H1 (cell line): ENCODE measurements at regions of chr11 and their contacts with region 1.

Region 1: GRCh38 chr11:94595076-94595475 is 27.9 kb downstream of the PIWIL4 start:
- DNase-seq: no peak
- H3K4me3 ChIP-seq: no peak overlapping the region
- H3K27ac ChIP-seq: no peak overlapping the region
- H3K4me1 ChIP-seq: no peaks in the 10 kb centered on the region
- H3K27me3 ChIP-seq: no peaks in the 10 kb centered on the region
- CTCF ChIP-seq: no peak
- EP300 ChIP-seq: no peak
- POLR2A ChIP-seq: no peak
- RAD21 ChIP-seq: no peak

Region 2: GRCh38 chr11:94519478-94520084 is 75.5 kb before region 1 on chr11:
- CTCF ChIA-PET with region 1: interaction called, 17 read pairs
- POLR2A ChIA-PET with region 1: no interaction called
- DNase-seq: no peak
- H3K4me3 ChIP-seq: no peak overlapping the region
- H3K27ac ChIP-seq: no peak overlapping the region
- H3K4me1 ChIP-seq: no peaks in the 10 kb centered on the region
- H3K27me3 ChIP-seq: no peaks in the 10 kb centered on the region
- CTCF ChIP-seq: peak in 2 of 3 experiments; percentile 28 to 34; a peak in 2 of 4 replicates
- EP300 ChIP-seq: no peak
- POLR2A ChIP-seq: no peak
- RAD21 ChIP-seq: peak in 1 of 2 experiments; percentile 23; a peak in 1 of 4 replicates

Region 3: DNA sequence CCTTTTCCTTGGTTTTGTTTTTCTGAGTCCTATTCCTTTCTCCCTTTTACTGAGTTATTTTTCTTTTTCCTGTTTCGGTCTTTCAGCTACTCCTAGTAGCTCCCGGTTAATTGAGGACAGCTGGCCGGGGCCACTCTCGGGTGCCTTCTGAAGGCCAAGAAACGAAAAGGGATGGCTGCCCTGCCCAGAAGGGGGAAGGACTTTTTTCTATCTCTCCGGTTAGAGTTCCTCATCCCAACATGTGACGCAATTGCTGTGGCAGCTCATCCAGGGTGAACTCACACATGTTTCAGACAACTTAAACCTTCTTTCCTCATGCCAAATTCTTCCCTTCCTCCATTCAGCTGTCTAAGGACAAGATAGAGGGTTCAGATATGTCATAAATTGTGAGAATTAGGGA is 55.7 kb after region 1 on chr11:
- CTCF ChIA-PET with region 1: no interaction called
- POLR2A ChIA-PET with region 1: no interaction called
- DNase-seq: no peak
- H3K4me3 ChIP-seq: peak overlapping the region; percentile 12 to 62 (median 32); a peak in 7 of 8 replicates
- H3K27ac ChIP-seq: peak overlapping the region; percentile 70
- H3K4me1 ChIP-seq: peaks cover 5 to 32% (median 17%) of the 10 kb centered on the region in 4 experiments; a peak in 6 of 7 replicates
- H3K27me3 ChIP-seq: no peaks in the 10 kb centered on the region
- CTCF ChIP-seq: no peak
- EP300 ChIP-seq: no peak
- POLR2A ChIP-seq: no peak; a peak in 1 of 3 replicates
- RAD21 ChIP-seq: no peak